ENCODE measurements at regions of chr17 and their contacts with region 1.

Region 1: DNA sequence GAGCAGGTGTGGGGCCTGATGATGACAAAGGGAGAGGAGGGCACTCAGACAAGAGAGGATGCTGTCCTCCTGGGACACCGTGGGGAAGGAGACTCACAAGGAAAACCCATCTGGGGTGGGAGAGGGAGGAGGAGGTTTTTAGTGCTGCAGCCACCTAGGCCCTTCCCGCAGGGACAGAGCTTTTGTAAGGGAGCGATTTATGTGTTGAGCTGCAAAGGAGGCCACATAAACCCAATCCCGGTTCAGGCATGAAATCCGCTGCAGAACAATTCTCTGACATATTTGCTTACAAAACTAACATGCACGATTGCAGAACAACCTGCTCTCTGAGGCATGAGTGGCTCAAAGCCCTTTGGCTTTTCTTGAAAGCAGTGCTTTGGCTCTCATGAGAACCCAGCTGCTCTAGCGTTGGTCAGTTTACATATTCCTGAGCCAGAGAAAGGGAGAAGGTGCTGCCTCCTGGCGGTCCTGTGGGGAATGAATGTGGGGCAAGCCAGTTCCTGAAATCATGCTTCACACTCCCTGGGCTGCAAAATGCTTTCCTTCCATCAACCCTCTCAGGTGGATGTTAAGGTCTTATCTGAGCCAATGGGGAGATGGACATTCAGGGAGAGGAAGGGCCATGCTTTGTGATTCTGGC is 122.4 kb upstream of the NLRP1 start:
- DNase-seq: peak; percentile 51 to 60 (median 52)
- ATAC-seq: peak; percentile 82
- H3K4me3 ChIP-seq: no peak overlapping the region
- H3K27ac ChIP-seq: no peak overlapping the region
- H3K4me1 ChIP-seq: no peaks in the 10 kb centered on the region; a peak in 1 of 5 replicates
- H3K27me3 ChIP-seq: no peaks in the 10 kb centered on the region; a peak in 1 of 5 replicates
- CTCF ChIP-seq: peak; percentile 69 to 74 (median 70)
- EP300 ChIP-seq: no peak
- POLR2A ChIP-seq: no peak
- RAD21 ChIP-seq: peak; percentile 26 to 70

Region 2: DNA sequence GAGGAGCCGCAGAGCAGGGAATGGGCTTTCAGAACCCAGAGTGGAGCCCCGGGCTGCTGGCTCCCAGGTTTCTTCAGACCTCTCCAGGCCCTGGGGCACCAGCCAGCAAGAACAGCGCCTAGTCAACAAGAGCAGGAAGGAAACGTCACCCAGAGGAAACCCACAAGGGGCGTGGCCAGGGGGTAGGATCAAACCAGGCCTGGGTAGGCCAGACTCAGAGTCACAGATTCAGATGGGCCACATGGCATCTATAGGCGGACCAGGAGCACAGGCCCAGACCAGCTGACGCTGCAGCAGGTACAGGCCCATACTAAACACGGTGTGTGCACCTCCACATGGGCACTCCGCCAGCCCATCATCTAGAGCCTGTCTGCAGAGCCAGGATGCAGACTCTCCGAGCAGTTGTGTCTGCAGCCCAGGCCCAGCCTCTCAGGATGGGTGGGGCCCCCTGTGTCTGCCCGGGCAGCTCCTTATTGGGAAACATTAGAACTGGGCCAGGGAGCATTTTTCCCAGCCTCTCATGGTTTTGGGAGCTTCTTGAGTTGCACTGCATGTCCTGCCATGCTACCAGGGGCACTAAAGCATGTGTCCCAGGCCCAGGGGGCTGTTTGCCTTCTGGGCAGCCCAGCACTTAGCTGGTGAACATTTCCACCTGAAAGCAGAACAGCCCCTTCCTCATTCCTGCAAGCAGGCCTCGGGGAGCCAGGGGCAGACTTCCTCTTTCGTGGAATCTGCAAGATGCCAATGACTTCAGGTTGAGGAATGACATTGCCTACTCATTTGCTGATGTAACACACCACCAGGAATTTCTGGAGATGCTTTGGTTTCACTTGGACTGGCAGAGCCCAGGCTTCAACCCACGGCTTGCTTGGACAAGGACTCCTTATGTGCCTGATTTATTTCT is 122.1 kb before region 1 on chr17 and contains the start of gene NLRP1:
- CTCF ChIA-PET with region 1: interaction called, 13 read pairs
- POLR2A ChIA-PET with region 1: no interaction called
- in situ Hi-C with region 1: no loop called
- intact Hi-C with region 1: loop called (anchors 2 kb)
- DNase-seq: peak in 2 of 4 experiments; percentile 10 to 16
- ATAC-seq: no peak
- H3K4me3 ChIP-seq: no peak within 1 kb of the TSS
- H3K27ac ChIP-seq: no peak within 1 kb of the TSS
- H3K4me1 ChIP-seq: no peaks in the 10 kb centered on the region
- H3K27me3 ChIP-seq: no peaks in the 10 kb centered on the region
- CTCF ChIP-seq: no peak
- EP300 ChIP-seq: no peak
- POLR2A ChIP-seq: no peak
- RAD21 ChIP-seq: no peak
- polyA plus RNA-seq, gene NLRP1: 4.0 to 4.1 TPM

Region 3: DNA sequence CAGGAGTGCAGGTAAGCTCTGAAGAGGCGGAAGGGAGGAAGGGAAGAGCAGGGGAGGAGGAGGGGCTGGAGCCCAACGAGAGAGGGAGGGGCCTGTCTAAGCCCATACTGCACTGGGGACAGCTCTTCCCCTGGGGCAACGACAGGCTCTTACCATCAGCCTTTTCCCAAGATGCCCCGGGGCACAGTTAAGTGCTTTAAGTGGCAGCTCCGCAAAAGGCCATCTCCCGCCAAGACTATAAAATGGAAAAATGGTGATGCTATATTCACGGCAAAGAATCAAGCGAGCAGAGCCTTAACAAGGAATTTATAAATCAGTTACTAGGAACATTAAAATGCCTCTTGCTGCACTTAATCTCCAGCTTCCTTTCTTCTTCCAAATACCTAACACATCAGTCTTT is 12.1 kb before region 1 on chr17:
- CTCF ChIA-PET with region 1: no interaction called
- POLR2A ChIA-PET with region 1: interaction called, 13 read pairs
- in situ Hi-C with region 1: no loop called
- intact Hi-C with region 1: no loop called
- DNase-seq: peak; percentile 6 to 21 (median 15)
- ATAC-seq: peak; percentile 81
- H3K4me3 ChIP-seq: no peak overlapping the region
- H3K27ac ChIP-seq: no peak overlapping the region
- H3K4me1 ChIP-seq: no peaks in the 10 kb centered on the region; a peak in 1 of 5 replicates
- H3K27me3 ChIP-seq: peaks cover 2 to 10% of the 10 kb centered on the region in 2 experiments; a peak in 4 of 5 replicates
- CTCF ChIP-seq: no peak
- EP300 ChIP-seq: no peak
- POLR2A ChIP-seq: no peak
- RAD21 ChIP-seq: no peak

Region 4: GRCh38 chr17:6421700-6422604 is 715.3 kb after region 1 on chr17:
- CTCF ChIA-PET with region 1: no interaction called
- POLR2A ChIA-PET with region 1: no interaction called
- in situ Hi-C with region 1: loop called (anchors 25 kb)
- intact Hi-C with region 1: no loop called
- DNase-seq: peak; percentile 83 to 88 (median 86)
- ATAC-seq: peak; percentile 96
- H3K4me3 ChIP-seq: no peak overlapping the region
- H3K27ac ChIP-seq: no peak overlapping the region
- H3K4me1 ChIP-seq: no peaks in the 10 kb centered on the region
- H3K27me3 ChIP-seq: peaks cover 2 to 37% of the 10 kb centered on the region in 2 experiments; a peak in 3 of 5 replicates
- CTCF ChIP-seq: peak; percentile 83 to 86 (median 84)
- EP300 ChIP-seq: no peak
- POLR2A ChIP-seq: no peak
- RAD21 ChIP-seq: peak; percentile 81 to 89

Measured in K562 (cell line).